ENCODE measurements at regions of chr7 and their contacts with region 1.

Region 1: GRCh38 chr7:81469869-81470723 is 299.8 kb downstream of the HGF start:
- DNase-seq: no peak
- ATAC-seq: peak; percentile 81
- H3K4me3 ChIP-seq: no peak overlapping the region
- H3K27ac ChIP-seq: no peak overlapping the region
- H3K4me1 ChIP-seq: no peaks in the 10 kb centered on the region
- H3K27me3 ChIP-seq: no peaks in the 10 kb centered on the region; a peak in 1 of 4 replicates
- CTCF ChIP-seq: peak; percentile 52 to 79 (median 57); a peak in 4 of 6 replicates
- EP300 ChIP-seq: no peak
- POLR2A ChIP-seq: no peak
- RAD21 ChIP-seq: peak; percentile 79

Region 2: GRCh38 chr7:80699045-80699638 is 771.0 kb before region 1 on chr7:
- CTCF ChIA-PET with region 1: interaction called, 41 read pairs
- POLR2A ChIA-PET with region 1: no interaction called
- RAD21 ChIA-PET with region 1: interaction called, 8 read pairs
- SMC1A ChIA-PET with region 1: interaction called, 13 read pairs
- in situ Hi-C with region 1: no loop called
- intact Hi-C with region 1: loop called (anchors 1 kb)
- DNase-seq: no peak
- ATAC-seq: peak; percentile 74
- H3K4me3 ChIP-seq: no peak overlapping the region
- H3K27ac ChIP-seq: no peak overlapping the region
- H3K4me1 ChIP-seq: no peaks in the 10 kb centered on the region
- H3K27me3 ChIP-seq: no peaks in the 10 kb centered on the region
- CTCF ChIP-seq: peak; percentile 36 to 71 (median 51); a peak in 5 of 6 replicates
- EP300 ChIP-seq: no peak
- POLR2A ChIP-seq: no peak
- RAD21 ChIP-seq: peak; percentile 85

Region 3: GRCh38 chr7:81064426-81064825 is 405.7 kb before region 1 on chr7:
- CTCF ChIA-PET with region 1: no interaction called
- POLR2A ChIA-PET with region 1: no interaction called
- RAD21 ChIA-PET with region 1: no interaction called
- SMC1A ChIA-PET with region 1: no interaction called
- in situ Hi-C with region 1: no loop called
- intact Hi-C with region 1: no loop called
- DNase-seq: no peak
- ATAC-seq: no peak
- H3K4me3 ChIP-seq: no peak overlapping the region
- H3K27ac ChIP-seq: no peak overlapping the region
- H3K4me1 ChIP-seq: no peaks in the 10 kb centered on the region
- H3K27me3 ChIP-seq: no peaks in the 10 kb centered on the region
- CTCF ChIP-seq: no peak
- EP300 ChIP-seq: no peak
- POLR2A ChIP-seq: no peak
- RAD21 ChIP-seq: no peak

Region 4: GRCh38 chr7:81482600-81483186 is 12.6 kb after region 1 on chr7:
- CTCF ChIA-PET with region 1: interaction called, 30 read pairs
- POLR2A ChIA-PET with region 1: no interaction called
- RAD21 ChIA-PET with region 1: interaction called, 7 read pairs
- SMC1A ChIA-PET with region 1: interaction called, 7 read pairs
- in situ Hi-C with region 1: no loop called
- intact Hi-C with region 1: no loop called
- DNase-seq: no peak
- ATAC-seq: peak; percentile 65
- H3K4me3 ChIP-seq: no peak overlapping the region
- H3K27ac ChIP-seq: no peak overlapping the region
- H3K4me1 ChIP-seq: no peaks in the 10 kb centered on the region
- H3K27me3 ChIP-seq: no peaks in the 10 kb centered on the region
- CTCF ChIP-seq: peak; percentile 36 to 58 (median 43); a peak in 4 of 6 replicates
- EP300 ChIP-seq: no peak
- POLR2A ChIP-seq: no peak
- RAD21 ChIP-seq: peak; percentile 53; the same call in 1 of the 2 replicates

Measured in GM12878 (cell line).